ENCODE measurements at regions of chr10 and their contacts with region 1.

Region 1: GRCh38 chr10:72126184-72126871 is 38.0 kb upstream of the SPOCK2 start:
- DNase-seq: no peak
- H3K4me3 Mint-ChIP-seq: no peak overlapping the region
- H3K27ac Mint-ChIP-seq: no peak overlapping the region
- H3K4me1 Mint-ChIP-seq: peaks cover 32% of the 10 kb centered on the region
- H3K27me3 Mint-ChIP-seq: no peaks in the 10 kb centered on the region

Region 2: DNA sequence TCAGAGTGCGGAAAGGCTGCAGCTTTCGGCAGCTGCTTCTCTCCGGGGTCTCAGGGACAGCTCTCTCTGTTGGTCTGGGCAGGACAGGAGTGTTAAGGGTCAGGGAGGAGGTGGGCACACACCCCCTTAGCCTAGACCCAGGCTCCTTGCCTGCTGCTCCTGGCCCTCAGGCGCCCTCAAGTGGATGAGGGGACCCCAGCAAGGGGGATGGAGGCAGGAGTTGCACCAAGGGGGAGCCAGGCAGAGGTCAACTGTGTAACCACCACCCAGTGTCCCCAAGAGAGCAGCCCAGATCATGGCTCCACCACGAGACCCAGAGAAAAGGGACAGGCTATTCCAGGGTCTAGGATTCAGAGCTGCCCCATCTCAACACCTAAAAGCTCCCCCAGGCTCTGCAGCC is 64.8 kb before region 1 on chr10:
- intact Hi-C with region 1: no loop called
- DNase-seq: no peak
- H3K4me3 Mint-ChIP-seq: no peak overlapping the region
- H3K27ac Mint-ChIP-seq: no peak overlapping the region
- H3K4me1 Mint-ChIP-seq: no peaks in the 10 kb centered on the region
- H3K27me3 Mint-ChIP-seq: no peaks in the 10 kb centered on the region

Region 3: DNA sequence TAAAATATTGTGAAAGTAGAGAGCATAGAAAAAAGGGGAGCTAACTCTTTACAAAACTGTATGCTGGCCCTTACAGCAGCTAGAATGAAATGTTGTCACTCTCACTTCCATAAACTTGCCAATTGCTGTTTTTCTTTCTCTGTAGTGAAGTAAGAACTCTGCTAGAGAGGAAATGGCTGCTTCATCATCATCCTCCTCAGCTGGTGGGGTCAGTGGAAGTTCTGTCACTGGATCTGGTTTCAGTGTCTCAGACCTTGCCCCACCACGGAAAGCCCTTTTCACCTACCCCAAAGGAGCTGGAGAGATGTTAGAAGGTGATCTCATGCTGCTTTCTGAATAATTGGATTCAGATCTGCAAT is 97.4 kb after region 1 on chr10:
- intact Hi-C with region 1: loop called (anchors 2 kb)
- DNase-seq: no peak
- H3K4me3 Mint-ChIP-seq: no peak overlapping the region
- H3K27ac Mint-ChIP-seq: peak overlapping the region; percentile 75
- H3K4me1 Mint-ChIP-seq: peaks cover 34% of the 10 kb centered on the region
- H3K27me3 Mint-ChIP-seq: no peaks in the 10 kb centered on the region

Region 4: DNA sequence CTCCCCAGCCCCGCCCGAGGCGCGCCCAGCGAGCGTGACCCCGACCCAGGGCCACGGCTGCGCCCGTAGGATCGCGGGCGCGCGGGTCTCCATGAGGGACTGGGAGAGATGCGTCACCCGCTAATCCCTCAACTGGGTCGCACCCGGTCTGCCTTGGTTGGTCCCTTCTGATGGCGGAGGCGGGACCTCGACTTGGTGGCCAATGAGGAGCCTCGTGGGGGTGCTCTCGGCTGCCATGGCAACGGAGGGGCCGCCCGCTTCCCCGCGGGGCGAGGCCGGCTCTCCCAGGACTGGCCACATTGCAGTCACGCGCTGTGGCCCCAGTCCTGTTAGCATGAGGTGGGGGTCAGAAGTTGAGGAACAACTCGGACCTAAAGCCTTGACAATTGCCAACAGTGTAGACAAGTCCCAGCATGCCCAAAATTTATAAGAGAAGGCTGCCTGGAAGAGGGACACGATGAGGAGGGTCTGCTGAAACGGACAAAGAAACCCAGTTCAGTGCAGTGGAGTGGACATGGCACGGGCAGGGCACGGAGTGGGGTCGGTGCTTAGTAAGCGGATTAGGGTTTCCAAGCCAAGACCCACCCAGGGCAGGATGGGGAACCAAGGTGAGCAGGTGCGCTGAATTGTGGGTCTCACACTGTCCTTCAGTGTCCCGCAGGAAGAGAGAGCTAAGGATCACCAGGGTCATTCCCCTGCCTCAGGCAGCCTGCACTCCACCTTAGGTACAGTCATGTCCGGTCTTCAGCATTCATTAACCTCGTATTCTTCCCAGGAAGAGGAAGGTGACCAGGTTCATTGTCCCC is 171.8 kb after region 1 on chr10:
- intact Hi-C with region 1: no loop called
- DNase-seq: peak; percentile 91
- H3K4me3 Mint-ChIP-seq: peak overlapping the region; percentile 76
- H3K27ac Mint-ChIP-seq: peak overlapping the region; percentile 98
- H3K4me1 Mint-ChIP-seq: peaks cover 50% of the 10 kb centered on the region
- H3K27me3 Mint-ChIP-seq: no peaks in the 10 kb centered on the region

Measured in activated T-helper 2 cell treated with anti-CD3 and anti-CD28 coated beads, Interferon-gamma antibody, Interleukin-2, Interleukin-4, amounts not matched to agents 10 μg/mL and 5 μg/mL and 100 μg/mL, durations not matched to agents 14 hours and 24 hours and 36 hours (primary cell).